ENCODE measurements at regions of chr19 and their contacts with region 1.

Region 1: GRCh38 chr19:45902651-45903625 is 525 bp upstream of the MYPOP start:
- DNase-seq: peak; percentile 99
- H3K4me3 ChIP-seq: peak overlapping the region; percentile 71 to 80 (median 74)
- H3K27ac ChIP-seq: peak overlapping the region; percentile 83 to 89 (median 84)
- H3K4me1 ChIP-seq: peaks cover 0 to 26% (median 21%) of the 10 kb centered on the region in 4 donors
- H3K27me3 ChIP-seq: no peaks in the 10 kb centered on the region
- CTCF ChIP-seq: peak in 1 of 4 experiments; percentile 27
- EP300 ChIP-seq: no peak
- POLR2A ChIP-seq: peak; percentile 45 to 63

Region 2: DNA sequence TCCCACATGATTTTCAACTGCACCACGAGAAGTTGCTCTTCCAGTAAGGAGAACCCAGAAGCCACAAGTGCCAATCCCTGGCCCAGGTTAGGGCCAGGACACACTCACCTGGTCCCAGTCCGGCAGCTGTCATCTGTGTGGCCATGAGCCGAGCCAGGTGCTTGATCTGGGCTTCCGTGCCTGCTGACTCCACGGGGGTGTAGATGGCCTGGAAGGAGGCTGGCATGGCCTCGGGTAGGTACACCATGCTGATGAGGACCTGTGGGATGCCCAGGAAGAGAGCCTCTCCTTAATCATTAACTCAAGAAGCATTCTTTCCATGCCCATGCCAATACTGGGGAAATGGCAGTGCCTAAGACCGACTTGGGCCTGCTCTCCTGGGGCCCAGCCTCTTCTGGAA is 68.0 kb before region 1 on chr19:
- intact Hi-C with region 1: no loop called
- DNase-seq: no peak
- H3K4me3 ChIP-seq: no peak overlapping the region
- H3K27ac ChIP-seq: no peak overlapping the region
- H3K4me1 ChIP-seq: no peaks in the 10 kb centered on the region
- H3K27me3 ChIP-seq: no peaks in the 10 kb centered on the region
- CTCF ChIP-seq: no peak
- EP300 ChIP-seq: no peak
- POLR2A ChIP-seq: no peak

Region 3: DNA sequence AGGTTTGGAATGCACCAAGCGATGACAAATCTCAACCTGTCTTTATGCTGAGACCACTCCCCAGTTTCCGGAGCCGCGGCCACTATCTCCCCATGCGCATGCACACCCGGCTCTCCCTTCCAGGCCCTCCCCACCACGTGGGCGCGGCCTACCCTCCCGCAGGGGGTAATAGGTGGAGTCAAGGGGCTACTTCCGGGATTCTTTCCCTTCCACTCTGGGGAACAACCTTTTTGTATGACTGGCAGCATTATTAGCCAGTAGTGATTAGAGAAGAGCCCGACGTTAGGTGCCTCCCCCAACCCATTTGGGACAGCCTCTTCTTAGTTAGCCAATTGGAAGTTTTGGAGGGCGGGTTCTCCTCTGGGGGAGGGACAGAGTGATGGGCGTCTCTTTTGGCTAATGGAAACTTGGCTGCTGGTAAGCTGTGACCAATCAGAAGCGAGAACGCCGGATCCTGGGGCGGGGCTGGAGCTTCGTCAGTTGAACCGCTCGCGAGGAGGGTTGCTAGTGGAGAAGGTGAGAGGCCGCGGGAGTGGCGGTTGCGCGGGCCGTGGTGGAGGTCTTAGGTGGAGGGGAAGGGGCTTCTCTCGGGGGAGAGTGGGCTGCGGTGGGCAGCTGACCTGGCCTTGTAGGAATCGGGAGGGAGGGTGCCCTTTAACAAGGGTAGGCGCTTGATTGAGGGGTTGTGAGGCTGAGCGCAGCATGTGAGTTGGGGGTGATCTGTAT is 92.2 kb after region 1 on chr19 and contains the start of gene CCDC61:
- intact Hi-C with region 1: loop called (anchors 5 kb)
- DNase-seq: peak; percentile 98
- H3K4me3 ChIP-seq: peak within 1 kb of the TSS; percentile 60 to 87 (median 74)
- H3K27ac ChIP-seq: peak within 1 kb of the TSS; percentile 75 to 85 (median 82)
- H3K4me1 ChIP-seq: peaks cover 0 to 18% (median 16%) of the 10 kb centered on the region in 4 donors
- H3K27me3 ChIP-seq: peaks cover 0 to 18% (median 10%) of the 10 kb centered on the region in 3 donors
- CTCF ChIP-seq: no peak
- EP300 ChIP-seq: no peak
- POLR2A ChIP-seq: peak; percentile 74 to 92
- total RNA-seq, gene CCDC61: 5.0 to 15.2 (median 8.0) TPM